Activated CD8-positive, alpha-beta memory T cell treated with anti-CD3 and anti-CD28 coated beads, Interleukin-2, amount 10 ng/mL, durations not matched to agents 7 days and 5 days (primary cell): ENCODE measurements at regions of chr6 and their contacts with region 1.

Region 1: DNA sequence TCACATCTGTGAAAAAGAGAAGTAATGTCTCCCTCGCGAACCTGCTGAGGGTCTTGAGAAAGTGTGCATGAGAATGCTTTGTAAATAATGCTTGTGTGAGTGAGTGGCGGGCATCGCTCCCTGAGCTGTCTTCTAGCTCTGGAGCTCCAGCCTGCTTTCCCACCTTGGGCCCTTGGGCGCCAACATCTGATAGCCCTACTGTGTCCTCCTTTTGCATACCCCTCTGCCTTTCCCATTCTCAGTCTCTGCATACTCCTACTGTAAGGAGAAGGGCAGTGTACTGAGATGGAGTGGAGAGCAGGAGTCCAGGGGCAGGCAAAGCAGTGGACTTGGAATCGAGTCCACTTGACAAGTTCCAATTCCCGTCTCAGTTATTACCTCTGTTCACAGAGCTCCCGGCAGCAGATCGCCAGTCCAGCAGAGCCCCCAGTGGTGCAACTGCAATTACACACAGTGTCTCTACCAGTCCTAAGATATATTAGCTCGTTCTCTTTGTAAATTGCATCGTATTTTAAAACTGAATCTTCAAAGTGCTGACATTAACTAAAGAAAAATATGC is 847 bp upstream of the NCR2 start:
- DNase-seq: no peak
- ATAC-seq: no peak
- H3K4me3 Mint-ChIP-seq: no peak overlapping the region
- H3K27ac Mint-ChIP-seq: peak overlapping the region; percentile 88
- H3K4me1 Mint-ChIP-seq: peaks cover 59% of the 10 kb centered on the region
- H3K27me3 Mint-ChIP-seq: no peaks in the 10 kb centered on the region

Region 2: GRCh38 chr6:41306187-41306854 is 28.2 kb before region 1 on chr6:
- CTCF ChIA-PET with region 1: interaction called, 29 read pairs
- DNase-seq: peak; percentile 61
- ATAC-seq: no peak
- H3K4me3 Mint-ChIP-seq: no peak overlapping the region
- H3K27ac Mint-ChIP-seq: no peak overlapping the region
- H3K4me1 Mint-ChIP-seq: peaks cover 2% of the 10 kb centered on the region
- H3K27me3 Mint-ChIP-seq: peaks cover 46% of the 10 kb centered on the region

Region 3: GRCh38 chr6:41344876-41345275 is 10.3 kb after region 1 on chr6:
- CTCF ChIA-PET with region 1: interaction called, 59 read pairs
- DNase-seq: peak; percentile 84
- ATAC-seq: peak; percentile 99
- H3K4me3 Mint-ChIP-seq: peak overlapping the region; percentile 60
- H3K27ac Mint-ChIP-seq: peak overlapping the region; percentile 96
- H3K4me1 Mint-ChIP-seq: peaks cover 58% of the 10 kb centered on the region
- H3K27me3 Mint-ChIP-seq: peaks cover 10% of the 10 kb centered on the region

Region 4: DNA sequence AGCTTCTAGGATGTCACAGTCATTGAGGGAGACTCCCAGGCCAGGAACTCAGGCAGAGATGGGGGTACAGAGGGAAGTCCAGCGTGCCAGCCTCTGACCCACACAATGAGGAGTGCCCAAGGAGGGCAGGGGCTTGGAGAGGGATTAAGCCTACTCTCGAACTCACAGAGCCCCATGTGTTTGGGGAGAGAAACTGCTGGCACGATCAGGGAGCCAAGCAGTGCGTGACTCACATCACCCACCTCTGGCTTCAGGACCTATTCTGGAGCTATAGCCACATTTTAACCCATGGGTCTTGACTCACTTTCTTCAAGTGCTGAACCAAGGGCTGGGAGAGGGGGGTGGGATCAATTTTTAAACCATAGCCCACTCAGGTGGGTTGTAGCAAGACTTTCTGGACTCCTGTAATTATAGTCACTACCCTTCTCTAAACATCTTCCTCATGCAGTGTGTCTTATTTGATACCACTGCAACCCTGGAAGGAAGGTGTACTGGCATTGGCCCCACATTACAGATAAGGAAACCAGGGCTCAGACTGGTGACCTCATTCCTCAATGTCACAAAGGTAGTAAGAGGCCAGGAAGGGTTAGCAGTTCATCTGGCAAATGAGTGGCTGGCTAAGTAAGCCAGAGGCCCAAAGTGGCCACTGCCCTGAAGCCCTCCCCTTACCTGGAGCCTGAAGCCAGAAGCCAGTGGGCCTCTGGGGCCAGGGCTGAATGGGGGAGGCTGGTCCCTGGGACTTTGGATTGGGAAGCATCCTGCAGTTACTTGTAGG is 223.7 kb after region 1 on chr6:
- CTCF ChIA-PET with region 1: no interaction called
- DNase-seq: no peak
- ATAC-seq: no peak
- H3K4me3 Mint-ChIP-seq: no peak overlapping the region
- H3K27ac Mint-ChIP-seq: no peak overlapping the region
- H3K4me1 Mint-ChIP-seq: peaks cover 26% of the 10 kb centered on the region
- H3K27me3 Mint-ChIP-seq: peaks cover 54% of the 10 kb centered on the region